HEK293 (cell line): ENCODE measurements at regions of chr18 and their contacts with region 1.

Region 1: GRCh38 chr18:62425465-62426195 is 97.2 kb upstream of the ZCCHC2 start:
- H3K4me3 ChIP-seq: peak overlapping the region; percentile 18; the same call in 1 of the 2 replicates
- H3K27ac ChIP-seq: no peak overlapping the region
- H3K4me1 ChIP-seq: 0 out of 2 replicates have a peak, but pooled peaks cover 5% of the 10 kb centered on the region
- CTCF ChIP-seq: peak; percentile 75

Region 2: DNA sequence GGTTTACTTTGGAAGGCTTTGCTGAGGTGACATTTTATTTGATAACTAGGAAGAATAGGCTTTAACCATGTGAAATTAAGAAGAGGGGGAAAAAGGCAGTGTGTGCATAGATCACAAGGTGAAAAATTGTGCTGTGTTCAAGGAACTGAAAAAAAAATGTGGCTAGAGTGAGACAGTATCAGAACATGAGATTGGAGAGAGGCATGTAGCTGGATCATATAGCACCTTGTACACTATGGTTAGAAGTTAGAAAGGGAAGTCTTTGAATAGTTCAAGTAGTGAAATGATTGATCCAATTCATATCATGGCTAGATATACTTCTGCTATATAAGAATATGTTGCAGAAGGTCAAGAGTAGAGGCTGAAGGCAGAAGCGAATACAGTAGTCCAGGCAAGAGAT is 112.8 kb before region 1 on chr18:
- CTCF ChIA-PET with region 1: interaction called, 11 read pairs
- POLR2A ChIA-PET with region 1: no interaction called
- H3K4me3 ChIP-seq: no peak overlapping the region
- H3K27ac ChIP-seq: no peak overlapping the region
- H3K4me1 ChIP-seq: no peaks in the 10 kb centered on the region
- CTCF ChIP-seq: no peak

Region 3: DNA sequence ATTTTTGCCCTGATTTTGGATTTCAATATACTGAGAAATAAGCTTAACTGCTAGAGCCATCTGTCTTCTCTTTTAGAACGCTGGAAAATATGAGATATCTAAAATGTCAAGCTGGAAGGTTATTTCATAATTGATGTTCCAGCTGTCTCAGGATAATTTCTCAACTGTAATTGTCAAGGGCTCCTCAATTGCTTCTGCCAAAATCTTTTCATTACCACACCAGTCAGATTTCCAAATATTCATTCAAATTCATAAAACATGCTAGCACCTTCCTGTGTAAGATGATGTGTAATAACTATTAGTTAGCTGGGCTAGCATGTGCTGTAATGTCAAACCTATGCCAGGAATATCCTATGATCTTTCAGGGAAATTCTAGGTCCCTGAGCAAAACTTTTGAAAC is 12.4 kb before region 1 on chr18:
- CTCF ChIA-PET with region 1: interaction called, 14 read pairs
- POLR2A ChIA-PET with region 1: no interaction called
- H3K4me3 ChIP-seq: no peak overlapping the region
- H3K27ac ChIP-seq: no peak overlapping the region
- H3K4me1 ChIP-seq: no peaks in the 10 kb centered on the region
- CTCF ChIP-seq: no peak

Region 4: GRCh38 chr18:62445386-62445917 is 19.8 kb after region 1 on chr18:
- CTCF ChIA-PET with region 1: interaction called, 10 read pairs
- POLR2A ChIA-PET with region 1: no interaction called
- H3K4me3 ChIP-seq: no peak overlapping the region
- H3K27ac ChIP-seq: no peak overlapping the region
- H3K4me1 ChIP-seq: peaks cover 10% of the 10 kb centered on the region
- CTCF ChIP-seq: no peak

Region 5: DNA sequence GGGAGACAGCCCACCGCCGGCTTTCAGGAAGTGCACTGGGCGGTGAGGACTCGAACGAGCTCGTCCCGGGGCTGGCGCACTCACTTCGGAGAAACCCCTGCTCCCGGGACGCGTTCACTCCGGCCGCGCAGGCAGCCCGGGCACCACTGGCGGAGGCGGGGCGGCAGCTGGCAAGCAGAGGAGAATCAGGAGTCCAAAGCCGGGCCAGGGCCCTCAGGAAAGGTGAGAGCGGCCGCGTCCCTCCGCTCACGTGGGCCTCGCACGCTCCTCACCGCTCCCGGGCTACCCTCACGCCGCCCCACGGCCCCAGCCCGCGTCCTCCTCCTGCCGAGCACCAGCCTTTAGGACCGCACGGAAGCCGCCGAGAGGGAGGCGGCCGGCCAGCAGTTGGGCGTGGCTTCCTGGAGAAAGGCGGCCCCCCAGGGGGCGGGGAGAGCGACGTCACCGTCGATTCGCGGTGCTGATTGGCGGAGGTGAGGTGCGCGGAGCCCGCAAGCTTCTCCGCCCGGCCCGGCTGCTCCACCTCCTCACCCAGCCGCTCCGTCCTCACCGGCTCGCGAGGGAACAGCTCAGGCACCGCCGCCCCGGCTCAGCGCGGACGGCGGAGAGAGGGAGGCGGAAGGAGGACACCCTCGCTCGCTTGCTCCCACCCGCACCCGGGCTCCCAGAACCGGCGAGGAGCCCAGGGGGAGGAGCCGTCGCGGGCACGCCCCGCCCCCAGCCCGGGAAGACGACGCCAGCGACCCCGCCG is 97.0 kb after region 1 on chr18 and contains the start of gene ZCCHC2:
- CTCF ChIA-PET with region 1: interaction called, 10 read pairs
- POLR2A ChIA-PET with region 1: interaction called, 15 read pairs
- H3K4me3 ChIP-seq: peak within 1 kb of the TSS; percentile 62
- H3K27ac ChIP-seq: peak within 1 kb of the TSS; percentile 97
- H3K4me1 ChIP-seq: peaks cover 15% of the 10 kb centered on the region
- CTCF ChIP-seq: no peak

Region 6: DNA sequence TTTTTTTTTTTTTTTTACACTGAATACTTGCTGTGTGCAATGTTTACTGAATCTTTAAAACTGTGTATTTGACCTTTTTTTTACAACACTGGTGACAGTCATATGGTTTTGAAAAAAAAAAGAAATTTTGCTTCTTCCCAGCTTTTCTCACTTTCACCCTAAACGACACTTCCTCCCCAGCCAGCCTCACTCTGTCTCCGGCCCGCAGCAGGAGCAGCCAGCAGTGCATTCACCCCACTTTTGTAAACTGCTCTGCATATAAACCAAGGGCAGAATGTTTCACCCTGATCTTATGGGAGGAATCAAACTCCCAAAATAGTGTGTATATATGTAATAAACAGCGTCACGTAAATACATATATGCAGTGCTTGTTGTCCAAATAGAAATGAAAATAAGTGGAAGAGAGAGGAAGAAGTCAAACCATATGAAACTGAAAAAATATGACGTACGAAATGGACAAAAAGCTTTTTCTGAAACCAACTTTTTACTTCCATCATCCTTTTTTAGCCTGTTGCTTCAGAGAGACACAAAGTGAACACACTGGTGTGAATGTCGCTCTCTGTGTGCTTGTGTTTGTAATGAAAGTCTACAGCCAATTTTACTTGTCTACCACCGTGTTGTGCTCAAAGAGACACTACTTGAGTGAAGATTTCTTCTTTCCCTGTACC is 151.3 kb after region 1 on chr18:
- CTCF ChIA-PET with region 1: interaction called, 11 read pairs
- POLR2A ChIA-PET with region 1: interaction called, 3 read pairs
- H3K4me3 ChIP-seq: no peak overlapping the region
- H3K27ac ChIP-seq: no peak overlapping the region
- H3K4me1 ChIP-seq: peaks cover 9% of the 10 kb centered on the region
- CTCF ChIP-seq: no peak